T-cell (primary cell): ENCODE measurements at regions of chr2 and their contacts with region 1.

Region 1: DNA sequence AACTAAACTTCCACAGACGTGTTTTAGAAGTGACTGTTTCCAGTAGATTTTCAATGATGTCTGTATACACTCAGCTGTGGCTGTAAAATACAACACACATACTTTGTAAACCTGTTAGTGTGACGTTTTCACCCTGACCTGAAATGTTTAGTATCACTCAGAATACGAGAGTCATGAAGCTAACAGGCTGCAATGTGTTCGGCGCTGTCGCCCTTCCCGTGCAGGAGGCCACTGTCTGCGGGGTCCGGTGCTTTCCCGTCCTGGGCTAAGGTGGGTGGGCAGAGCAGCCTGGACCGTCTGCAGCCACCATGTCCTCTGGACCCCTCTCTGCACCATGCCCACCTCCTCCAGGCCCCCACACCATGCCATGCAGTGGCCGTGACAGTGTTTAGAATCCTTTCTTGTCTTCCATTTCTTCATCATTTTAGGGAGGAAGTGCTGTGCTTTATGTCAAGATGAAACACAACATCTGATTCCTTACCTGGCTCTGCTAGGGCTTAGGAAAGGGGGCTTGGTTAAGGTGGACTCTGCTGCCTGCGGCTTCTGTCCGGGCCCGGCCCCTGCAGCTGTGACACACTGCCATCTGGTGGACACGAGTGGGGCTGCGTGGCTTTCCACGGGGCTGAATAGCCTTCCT is 53.8 kb upstream of the RBM44 start:
- DNase-seq: peak; percentile 35 to 85 (median 71)
- ATAC-seq: peak; percentile 78 to 90 (median 85)
- H3K4me3 ChIP-seq: no peak overlapping the region
- H3K4me3 Mint-ChIP-seq: no peak overlapping the region
- H3K27ac ChIP-seq: peak overlapping the region; percentile 50
- H3K27ac Mint-ChIP-seq: peak overlapping the region; percentile 69 to 84
- H3K4me1 ChIP-seq: peaks cover 2 to 35% of the 10 kb centered on the region in 2 experiments
- H3K4me1 Mint-ChIP-seq: peaks cover 35 to 48% (median 41%) of the 10 kb centered on the region in 3 donors
- H3K27me3 ChIP-seq: no peaks in the 10 kb centered on the region
- H3K27me3 Mint-ChIP-seq: no peaks in the 10 kb centered on the region

Region 2: GRCh38 chr2:237512774-237513466 is 231.8 kb before region 1 on chr2:
- CTCF ChIA-PET with region 1: interaction called, 5 to 17 read pairs
- POLR2A ChIA-PET with region 1: no interaction called
- DNase-seq: peak; percentile 50 to 87 (median 71)
- ATAC-seq: peak; percentile 63 to 71 (median 71)
- H3K4me3 ChIP-seq: no peak overlapping the region
- H3K4me3 Mint-ChIP-seq: no peak overlapping the region
- H3K27ac ChIP-seq: no peak overlapping the region
- H3K27ac Mint-ChIP-seq: no peak overlapping the region
- H3K4me1 ChIP-seq: no peaks in the 10 kb centered on the region
- H3K4me1 Mint-ChIP-seq: no peaks in the 10 kb centered on the region
- H3K27me3 ChIP-seq: peaks cover 0 to 34% of the 10 kb centered on the region in 2 experiments
- H3K27me3 Mint-ChIP-seq: peaks cover 4 to 19% of the 10 kb centered on the region in 2 donors

Region 3: DNA sequence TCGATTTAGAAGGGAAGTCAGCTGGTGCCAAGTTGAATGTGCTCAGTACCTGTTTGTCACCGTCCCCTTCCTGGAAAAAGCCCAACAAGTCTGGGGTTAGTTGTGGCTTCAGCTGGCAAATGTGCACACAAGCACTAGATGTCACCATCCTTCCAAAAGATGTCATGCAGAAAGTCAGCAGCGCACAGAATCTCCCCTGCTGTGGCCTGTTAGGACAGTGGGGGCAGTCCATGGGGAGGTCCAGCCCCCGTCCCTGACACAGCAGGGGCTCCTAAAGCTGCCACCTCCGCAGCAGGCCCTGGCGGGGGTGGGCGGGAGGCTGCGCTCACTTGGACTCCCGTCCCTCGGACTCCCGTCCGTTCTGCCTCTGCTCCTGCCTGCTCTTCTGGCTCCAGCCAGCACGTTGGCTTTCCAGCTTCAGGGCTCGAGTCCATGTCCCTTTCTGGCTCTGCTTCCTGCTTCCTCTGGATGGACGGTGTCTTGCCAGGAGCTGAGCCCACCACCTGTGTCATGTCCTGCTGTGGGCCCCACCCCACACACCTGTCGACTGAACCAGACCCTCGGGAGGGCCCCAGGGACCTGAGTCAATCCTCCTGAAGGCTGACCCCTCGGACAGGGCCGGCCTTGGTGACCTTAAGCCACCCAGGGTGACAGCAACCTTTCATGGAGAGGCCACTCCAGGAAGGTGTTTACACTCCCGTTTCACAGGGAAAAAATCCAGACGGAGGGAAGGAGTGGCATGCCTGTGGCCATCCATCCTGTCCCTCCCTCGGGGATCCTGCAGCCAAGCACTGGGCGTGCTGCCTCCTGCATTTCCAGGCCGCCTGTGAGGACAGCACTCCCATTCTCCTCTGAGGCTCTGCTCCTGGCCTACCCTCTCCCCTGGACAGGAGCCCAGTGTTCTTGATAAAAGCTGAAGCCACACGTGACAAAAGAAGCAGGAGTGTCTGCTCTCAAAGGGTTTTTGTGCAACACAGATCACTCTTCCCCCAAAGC is 162.7 kb before region 1 on chr2:
- CTCF ChIA-PET with region 1: interaction called, 3 to 10 read pairs
- POLR2A ChIA-PET with region 1: no interaction called
- DNase-seq: peak in 30 of 35 experiments; percentile 6 to 69 (median 39)
- ATAC-seq: peak; percentile 48 to 94 (median 67)
- H3K4me3 ChIP-seq: no peak overlapping the region
- H3K4me3 Mint-ChIP-seq: no peak overlapping the region
- H3K27ac ChIP-seq: no peak overlapping the region
- H3K27ac Mint-ChIP-seq: no peak overlapping the region
- H3K4me1 ChIP-seq: peaks cover 0 to 8% of the 10 kb centered on the region in 2 experiments
- H3K4me1 Mint-ChIP-seq: peaks cover 0 to 3% (median 3%) of the 10 kb centered on the region in 3 donors
- H3K27me3 ChIP-seq: peaks cover 0 to 14% of the 10 kb centered on the region in 2 experiments
- H3K27me3 Mint-ChIP-seq: peaks cover 0 to 3% of the 10 kb centered on the region in 2 donors

Region 4: DNA sequence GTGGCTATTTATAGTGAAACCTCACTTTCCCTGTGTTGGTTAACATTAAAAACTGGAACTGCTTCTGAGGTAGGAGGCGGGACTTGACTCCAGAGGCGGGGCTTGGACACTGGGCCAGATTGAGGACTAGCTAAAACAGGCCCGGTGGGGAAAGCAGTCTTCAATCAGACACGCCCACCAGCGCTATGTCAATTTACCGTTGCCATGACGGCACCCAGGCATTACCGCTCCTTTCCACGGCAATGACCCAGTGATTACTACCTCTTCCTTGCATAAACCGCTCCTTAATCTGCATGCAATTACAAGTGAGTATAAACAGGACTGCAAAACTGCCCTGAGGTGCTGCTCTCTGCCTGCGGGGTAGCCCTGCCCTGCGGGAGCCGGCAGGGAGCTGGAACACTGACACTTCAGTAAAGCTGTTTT is 82.0 kb before region 1 on chr2:
- CTCF ChIA-PET with region 1: no interaction called
- POLR2A ChIA-PET with region 1: no interaction called
- DNase-seq: peak in 23 of 35 experiments; percentile 15 to 61 (median 31)
- ATAC-seq: peak in 2 of 4 experiments; percentile 27 to 79
- H3K4me3 ChIP-seq: no peak overlapping the region
- H3K4me3 Mint-ChIP-seq: no peak overlapping the region
- H3K27ac ChIP-seq: no peak overlapping the region
- H3K27ac Mint-ChIP-seq: no peak overlapping the region
- H3K4me1 ChIP-seq: peaks cover 0 to 4% of the 10 kb centered on the region in 2 experiments
- H3K4me1 Mint-ChIP-seq: peaks cover 7 to 10% (median 7%) of the 10 kb centered on the region in 3 donors
- H3K27me3 ChIP-seq: peaks cover 0 to 36% of the 10 kb centered on the region in 2 experiments
- H3K27me3 Mint-ChIP-seq: peaks cover 8 to 14% of the 10 kb centered on the region in 2 donors

Region 5: DNA sequence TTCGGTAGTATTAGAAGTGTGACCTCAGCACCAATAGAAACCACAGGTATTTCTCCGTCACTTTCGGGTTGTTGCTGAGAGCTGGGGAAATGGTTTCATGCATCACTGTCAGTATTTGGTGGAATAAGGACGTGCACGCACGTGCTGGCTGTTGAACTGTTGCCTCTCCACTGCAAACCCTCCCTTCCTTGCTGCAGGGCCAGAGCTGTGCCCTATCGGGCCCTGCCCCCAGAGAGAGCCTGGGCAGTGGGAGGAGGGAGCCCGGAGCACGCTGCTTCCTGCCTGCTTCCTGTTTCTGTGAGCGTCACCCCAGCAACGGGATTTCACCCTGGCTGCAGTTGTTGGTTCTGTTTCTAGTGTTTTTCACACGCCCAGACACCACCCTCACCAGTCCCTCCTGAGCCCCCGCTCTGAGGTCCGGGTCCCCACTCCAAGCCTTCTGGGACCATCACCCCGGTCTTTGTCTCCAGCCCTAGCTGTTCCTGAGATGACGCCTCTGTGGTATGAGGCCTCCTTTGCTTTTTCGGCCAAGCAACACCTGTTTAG is 69.9 kb before region 1 on chr2:
- CTCF ChIA-PET with region 1: interaction called, 40 to 90 read pairs
- POLR2A ChIA-PET with region 1: interaction called, 7 to 11 read pairs
- DNase-seq: peak; percentile 52 to 94 (median 88)
- ATAC-seq: peak; percentile 64 to 76 (median 68)
- H3K4me3 ChIP-seq: peak overlapping the region; percentile 58 to 76
- H3K4me3 Mint-ChIP-seq: peak overlapping the region; percentile 81 to 86 (median 82)
- H3K27ac ChIP-seq: peak overlapping the region; percentile 99
- H3K27ac Mint-ChIP-seq: peak overlapping the region; percentile 93 to 98
- H3K4me1 ChIP-seq: peaks cover 45 to 48% of the 10 kb centered on the region in 2 experiments
- H3K4me1 Mint-ChIP-seq: peaks cover 48 to 66% (median 50%) of the 10 kb centered on the region in 3 donors
- H3K27me3 ChIP-seq: peaks cover 0 to 7% of the 10 kb centered on the region in 2 experiments
- H3K27me3 Mint-ChIP-seq: no peaks in the 10 kb centered on the region

Region 6: GRCh38 chr2:237686659-237687136 is 58.0 kb before region 1 on chr2:
- CTCF ChIA-PET with region 1: interaction called, 7 to 10 read pairs
- POLR2A ChIA-PET with region 1: no interaction called
- DNase-seq: no peak
- ATAC-seq: no peak
- H3K4me3 ChIP-seq: no peak overlapping the region
- H3K4me3 Mint-ChIP-seq: peak overlapping the region in 1 of 3 donors; percentile 28
- H3K27ac ChIP-seq: peak overlapping the region; percentile 96
- H3K27ac Mint-ChIP-seq: peak overlapping the region; percentile 99 to 100
- H3K4me1 ChIP-seq: peaks cover 33 to 52% of the 10 kb centered on the region in 2 experiments
- H3K4me1 Mint-ChIP-seq: peaks cover 53 to 60% (median 54%) of the 10 kb centered on the region in 3 donors
- H3K27me3 ChIP-seq: no peaks in the 10 kb centered on the region
- H3K27me3 Mint-ChIP-seq: no peaks in the 10 kb centered on the region

Region 7: DNA sequence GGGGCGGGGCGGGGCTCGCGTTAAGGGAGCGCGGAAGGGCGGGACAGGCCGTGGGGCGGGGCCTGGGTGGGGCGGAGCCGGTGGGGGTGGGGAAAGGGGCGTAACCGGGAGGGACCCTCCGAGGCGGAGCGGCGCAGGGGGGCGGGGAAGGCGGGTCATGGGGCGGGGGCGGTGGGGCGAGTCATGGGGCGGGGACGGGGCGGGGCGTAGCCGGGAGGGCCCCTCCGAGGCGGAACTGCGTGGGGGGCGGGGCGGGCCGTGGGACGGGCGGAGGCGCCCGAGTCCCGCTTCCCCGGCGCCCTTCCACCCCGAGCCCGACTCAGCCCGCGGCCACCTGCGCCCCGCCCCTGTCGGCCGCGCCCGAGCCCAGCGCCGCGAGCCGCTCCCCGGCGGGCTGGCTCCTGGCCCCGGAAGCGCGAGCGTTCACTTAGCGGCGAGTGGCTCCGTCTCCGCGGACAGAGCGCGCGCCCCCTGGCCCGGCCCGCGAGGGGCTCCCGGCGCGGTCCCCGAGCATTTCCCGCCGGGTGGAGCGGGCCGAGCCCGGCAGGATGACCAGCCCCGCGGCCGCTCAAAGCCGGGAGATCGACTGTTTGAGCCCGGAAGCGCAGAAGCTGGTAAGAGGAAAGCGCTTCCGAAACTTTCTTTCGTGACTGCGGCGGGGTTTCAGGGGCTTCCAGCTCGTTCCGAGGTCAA is 52.7 kb before region 1 on chr2:
- CTCF ChIA-PET with region 1: interaction called, 7 to 21 read pairs
- POLR2A ChIA-PET with region 1: interaction called in 1 of 2 experiments, 3 read pairs
- DNase-seq: peak; percentile 85 to 98 (median 91)
- ATAC-seq: peak; percentile 66 to 77 (median 76)
- H3K4me3 ChIP-seq: peak overlapping the region; percentile 82 to 93
- H3K4me3 Mint-ChIP-seq: peak overlapping the region; percentile 84 to 89 (median 87)
- H3K27ac ChIP-seq: peak overlapping the region; percentile 95
- H3K27ac Mint-ChIP-seq: peak overlapping the region; percentile 93 to 97
- H3K4me1 ChIP-seq: peaks cover 46 to 77% of the 10 kb centered on the region in 2 experiments
- H3K4me1 Mint-ChIP-seq: peaks cover 77 to 82% (median 80%) of the 10 kb centered on the region in 3 donors
- H3K27me3 ChIP-seq: no peaks in the 10 kb centered on the region
- H3K27me3 Mint-ChIP-seq: no peaks in the 10 kb centered on the region

Region 8: GRCh38 chr2:237700512-237701032 is 44.2 kb before region 1 on chr2:
- CTCF ChIA-PET with region 1: interaction called, 4 to 21 read pairs
- POLR2A ChIA-PET with region 1: no interaction called
- DNase-seq: peak in 31 of 35 experiments; percentile 59 to 87 (median 72)
- ATAC-seq: peak; percentile 18 to 81 (median 36)
- H3K4me3 ChIP-seq: peak overlapping the region in 1 of 2 donors; percentile 25
- H3K4me3 Mint-ChIP-seq: peak overlapping the region; percentile 44 to 77 (median 59)
- H3K27ac ChIP-seq: peak overlapping the region; percentile 82
- H3K27ac Mint-ChIP-seq: peak overlapping the region; percentile 89 to 96
- H3K4me1 ChIP-seq: peaks cover 74 to 96% of the 10 kb centered on the region in 2 experiments
- H3K4me1 Mint-ChIP-seq: peaks cover 96 to 98% (median 96%) of the 10 kb centered on the region in 3 donors
- H3K27me3 ChIP-seq: no peaks in the 10 kb centered on the region
- H3K27me3 Mint-ChIP-seq: no peaks in the 10 kb centered on the region